Right lobe of liver (tissue), 6 donors: ENCODE measurements at regions of chr17 and their contacts with region 1.

Region 1: DNA sequence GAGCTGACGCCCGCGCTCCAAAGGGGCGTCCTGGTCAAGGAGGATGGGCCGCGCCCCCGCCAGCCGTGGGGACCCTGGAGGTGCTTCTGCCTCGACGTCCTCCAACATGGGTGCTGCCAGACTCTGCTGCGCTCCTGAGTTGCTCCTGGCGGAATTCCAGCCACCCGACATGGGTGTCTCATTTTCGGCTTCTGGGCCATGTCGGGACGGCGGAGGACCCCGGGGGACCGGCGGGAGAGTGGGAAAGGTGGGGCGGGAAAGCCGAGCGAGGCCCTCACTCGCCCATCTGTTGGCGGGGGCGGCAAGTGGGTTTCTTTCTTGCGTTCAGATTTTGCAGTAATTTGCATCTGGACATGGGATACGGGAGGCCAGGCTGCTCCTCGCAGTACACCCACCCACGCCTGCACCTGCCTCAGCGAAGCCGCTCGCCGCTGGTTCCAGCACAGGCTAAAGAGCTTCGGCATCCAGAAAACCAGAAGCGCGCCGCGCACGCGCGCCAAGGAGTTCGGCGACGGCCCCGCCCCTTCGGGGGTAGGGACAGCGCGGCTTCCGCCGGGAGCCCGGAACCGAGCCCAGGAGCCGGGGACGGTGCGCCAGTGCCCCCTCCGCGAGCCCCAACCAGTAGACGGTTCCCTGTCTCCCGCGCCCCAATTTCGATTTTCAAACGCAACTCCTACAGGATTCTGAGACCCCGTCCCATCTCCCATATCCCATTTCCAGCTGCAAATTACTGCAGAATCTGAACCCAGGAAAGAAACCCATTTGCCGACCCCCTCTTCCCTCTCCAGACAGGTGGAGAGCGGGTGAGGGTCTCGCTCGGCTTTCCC is at the start of gene ARMC7:
- DNase-seq: peak; percentile 93 to 94 (median 94)
- ATAC-seq: peak; percentile 85 to 90 (median 88)
- H3K4me3 ChIP-seq: peak within 1 kb of the TSS; percentile 81 to 90 (median 89)
- H3K27ac ChIP-seq: peak within 1 kb of the TSS; percentile 50 to 77 (median 56)
- H3K4me1 ChIP-seq: peaks cover 0 to 16% (median 5%) of the 10 kb centered on the region in 4 donors
- H3K27me3 ChIP-seq: no peaks in the 10 kb centered on the region
- CTCF ChIP-seq: no peak
- POLR2A ChIP-seq: peak; percentile 84
- total RNA-seq, gene ARMC7: 4.7 to 6.3 (median 5.3) TPM

Region 2: GRCh38 chr17:75059369-75060345 is 50.0 kb before region 1 on chr17:
- intact Hi-C with region 1: loop called in 1 of 2 experiments (anchors 10 kb)
- DNase-seq: no peak
- ATAC-seq: peak; percentile 80 to 93 (median 89)
- H3K4me3 ChIP-seq: no peak overlapping the region
- H3K27ac ChIP-seq: peak overlapping the region in 1 of 3 donors; percentile 16
- H3K4me1 ChIP-seq: peaks cover 0 to 14% (median 0%) of the 10 kb centered on the region in 4 donors
- H3K27me3 ChIP-seq: no peaks in the 10 kb centered on the region
- CTCF ChIP-seq: peak; percentile 50 to 56 (median 54)
- POLR2A ChIP-seq: no peak

Region 3: DNA sequence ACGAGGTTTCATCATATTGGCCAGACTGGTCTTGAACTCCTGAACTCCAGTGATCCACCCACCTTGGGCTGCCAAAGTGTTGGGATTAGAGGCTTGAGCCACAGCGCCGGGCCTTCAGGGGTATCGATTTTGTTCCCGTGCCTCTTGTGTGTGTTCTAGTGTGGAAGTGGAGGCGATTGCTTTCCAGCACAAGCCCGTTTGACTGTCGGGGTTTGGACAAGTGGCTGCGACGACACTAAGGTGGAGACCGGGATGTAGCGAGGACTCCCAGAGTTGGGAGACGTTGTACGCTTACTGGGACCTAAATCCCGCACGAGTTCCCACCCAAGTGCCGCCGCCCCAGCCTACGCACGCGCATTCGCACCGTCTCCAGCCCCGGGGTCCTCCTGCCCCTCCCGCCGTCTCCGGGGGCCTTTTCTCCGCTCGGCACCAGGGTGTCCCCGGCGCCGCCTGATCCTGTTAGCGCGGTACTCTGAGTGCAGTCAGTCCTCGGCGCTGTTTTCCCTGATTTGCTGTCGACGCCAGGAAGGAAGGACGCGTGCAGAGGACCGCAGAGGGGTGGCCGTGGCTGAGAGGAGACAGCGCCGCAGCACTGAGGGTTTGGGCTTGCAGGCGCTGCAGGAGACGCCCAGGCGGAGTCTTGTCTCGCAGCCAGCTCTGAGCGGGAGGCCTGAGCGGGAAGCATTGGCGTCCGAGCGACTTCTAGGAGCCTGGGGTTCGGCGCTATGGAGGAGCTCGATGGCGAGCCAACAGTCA is 95.6 kb after region 1 on chr17 and contains the start of gene NUP85:
- intact Hi-C with region 1: loop called in 1 of 2 experiments (anchors 10 kb)
- DNase-seq: peak; percentile 93 to 95 (median 94)
- ATAC-seq: peak; percentile 91 to 95 (median 92)
- H3K4me3 ChIP-seq: peak within 1 kb of the TSS; percentile 72 to 99 (median 81)
- H3K27ac ChIP-seq: peak within 1 kb of the TSS; percentile 96 to 99 (median 98)
- H3K4me1 ChIP-seq: peaks cover 0 to 28% (median 3%) of the 10 kb centered on the region in 4 donors
- H3K27me3 ChIP-seq: no peaks in the 10 kb centered on the region
- CTCF ChIP-seq: no peak
- POLR2A ChIP-seq: peak; percentile 72
- total RNA-seq, gene NUP85: 15.3 to 32.8 (median 25.9) TPM

Region 4: DNA sequence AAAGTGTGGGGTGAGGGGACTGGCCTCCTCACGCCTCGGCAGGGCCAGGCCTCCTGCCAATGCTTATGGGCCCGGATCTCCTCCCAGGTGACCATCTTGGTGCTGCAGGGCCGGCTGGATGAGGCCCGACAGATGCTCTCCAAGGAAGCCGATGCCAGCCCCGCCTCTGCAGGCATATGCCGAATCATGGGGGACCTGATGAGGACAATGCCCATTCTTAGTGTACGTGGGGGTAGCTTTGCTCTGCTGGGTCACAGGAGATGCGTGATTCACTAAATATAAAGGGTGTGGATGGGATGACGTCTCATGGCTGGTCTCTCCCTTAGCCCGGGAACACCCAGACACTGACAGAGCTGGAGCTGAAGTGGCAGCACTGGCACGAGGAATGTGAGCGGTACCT is 115.4 kb after region 1 on chr17:
- intact Hi-C with region 1: no loop called
- DNase-seq: no peak
- ATAC-seq: no peak
- H3K4me3 ChIP-seq: no peak overlapping the region
- H3K27ac ChIP-seq: no peak overlapping the region
- H3K4me1 ChIP-seq: no peaks in the 10 kb centered on the region
- H3K27me3 ChIP-seq: no peaks in the 10 kb centered on the region
- CTCF ChIP-seq: no peak
- POLR2A ChIP-seq: no peak